ENCODE measurements at regions of chr1 and their contacts with region 1.

Region 1: GRCh38 chr1:20786253-20787028 is 666 bp downstream of the HP1BP3 start:
- DNase-seq: peak; percentile 90 to 98 (median 96)
- ATAC-seq: peak; percentile 75
- H3K4me3 ChIP-seq: peak overlapping the region; percentile 87
- H3K4me3 Mint-ChIP-seq: peak overlapping the region; percentile 99
- H3K27ac ChIP-seq: peak overlapping the region; percentile 85
- H3K27ac Mint-ChIP-seq: peak overlapping the region; percentile 97
- H3K4me1 ChIP-seq: peaks cover 37% of the 10 kb centered on the region
- H3K4me1 Mint-ChIP-seq: peaks cover 42% of the 10 kb centered on the region
- H3K27me3 ChIP-seq: no peaks in the 10 kb centered on the region
- H3K27me3 Mint-ChIP-seq: no peaks in the 10 kb centered on the region
- CTCF ChIP-seq: no peak

Region 2: DNA sequence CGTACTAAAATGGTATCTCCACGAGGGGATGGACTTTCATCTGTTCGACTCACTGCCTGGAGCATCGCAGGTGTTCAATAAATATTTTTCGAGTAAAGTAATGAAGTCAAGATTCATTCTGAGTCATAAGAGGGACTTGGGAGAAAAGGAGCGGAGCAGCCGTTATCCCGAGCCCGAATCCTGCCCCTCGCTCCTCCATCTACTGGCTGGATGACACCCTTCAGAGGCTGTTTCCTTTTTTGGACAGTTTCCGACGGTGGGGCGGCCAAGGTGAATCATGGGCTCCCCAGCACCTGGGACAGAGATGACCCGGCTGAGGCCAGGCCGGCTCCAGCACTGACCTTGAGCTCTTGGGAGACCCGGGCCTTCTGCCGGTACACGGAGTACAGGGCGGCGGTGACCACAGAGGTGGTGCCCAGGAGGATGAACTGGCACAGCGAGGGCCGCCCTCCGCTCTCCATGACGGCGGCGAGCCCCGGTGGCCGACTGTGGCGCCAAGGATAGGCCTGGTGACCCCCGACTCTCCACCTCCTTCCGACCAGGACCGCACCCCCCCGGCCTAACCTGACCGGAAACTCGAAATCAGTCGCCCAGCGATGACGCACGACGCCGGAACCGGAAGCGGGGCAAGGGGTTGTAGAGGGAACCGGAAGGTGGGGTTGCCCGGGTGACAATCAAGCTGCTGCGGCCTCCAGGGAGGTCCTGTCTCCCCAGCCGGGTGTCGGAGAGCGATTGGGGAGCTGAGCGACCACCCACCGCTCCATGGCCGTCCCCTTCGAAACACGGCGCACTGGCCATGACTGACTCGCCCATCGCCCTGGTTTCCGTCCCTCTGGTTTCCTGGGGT is 278.7 kb before region 1 on chr1 and contains the start of gene MUL1:
- CTCF ChIA-PET with region 1: no interaction called
- POLR2A ChIA-PET with region 1: no interaction called
- intact Hi-C with region 1: loop called in 1 of 2 experiments (anchors 2 kb)
- DNase-seq: peak; percentile 85 to 95 (median 91)
- ATAC-seq: peak; percentile 85
- H3K4me3 ChIP-seq: peak within 1 kb of the TSS; percentile 100
- H3K4me3 Mint-ChIP-seq: peak within 1 kb of the TSS; percentile 86
- H3K27ac ChIP-seq: peak within 1 kb of the TSS; percentile 93 to 98
- H3K27ac Mint-ChIP-seq: peak within 1 kb of the TSS; percentile 83
- H3K4me1 ChIP-seq: peaks cover 25% of the 10 kb centered on the region
- H3K4me1 Mint-ChIP-seq: peaks cover 30% of the 10 kb centered on the region
- H3K27me3 ChIP-seq: no peaks in the 10 kb centered on the region
- H3K27me3 Mint-ChIP-seq: peaks cover 11% of the 10 kb centered on the region
- CTCF ChIP-seq: no peak
- total RNA-seq, gene MUL1: 17.2 to 17.6 TPM

Region 3: DNA sequence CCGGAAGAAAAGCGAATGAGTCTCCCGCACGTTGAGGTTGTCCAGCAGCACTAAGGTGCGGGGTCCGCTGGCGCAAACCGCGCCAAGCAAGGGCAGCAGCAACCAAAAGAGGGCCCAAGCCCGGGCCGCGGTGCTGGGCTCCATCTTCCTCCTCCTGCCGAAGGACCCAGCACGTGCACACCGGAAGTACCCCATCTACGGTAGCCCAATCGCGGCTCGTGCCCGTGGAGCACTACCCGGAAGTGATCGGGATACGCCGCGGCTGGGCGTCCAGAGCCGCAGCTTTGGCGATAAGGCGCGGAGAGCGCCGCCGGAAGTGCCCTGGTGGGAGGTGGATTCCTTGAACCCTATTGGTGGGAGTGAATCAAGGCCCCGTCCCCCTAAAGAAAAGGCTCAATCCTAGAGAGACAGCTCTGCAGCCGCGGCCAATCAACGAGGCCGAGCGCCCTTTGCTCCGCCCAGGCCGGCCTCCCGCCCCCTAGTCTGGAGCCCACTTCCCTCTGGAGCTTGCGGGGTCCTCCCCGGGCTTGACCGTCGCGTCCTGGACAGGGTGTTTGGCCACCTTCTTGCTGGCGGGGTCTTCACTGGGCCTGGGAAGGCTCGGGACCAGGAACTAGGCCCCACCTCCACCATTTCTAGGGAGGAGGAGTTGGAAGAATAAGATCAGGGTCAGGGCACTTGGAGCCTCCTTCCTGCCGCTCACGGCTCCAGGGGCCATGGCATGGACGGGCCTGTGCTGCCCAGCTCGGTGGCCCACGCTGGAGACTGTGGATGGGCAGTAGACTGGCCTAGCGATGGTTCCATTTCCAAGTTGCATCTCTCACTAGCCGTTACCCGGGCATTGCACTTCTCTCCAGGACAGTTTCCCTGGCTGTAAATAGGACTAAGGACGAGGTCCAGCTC is 125.0 kb before region 1 on chr1 and contains the start of gene DDOST:
- CTCF ChIA-PET with region 1: interaction called, 4 read pairs
- POLR2A ChIA-PET with region 1: interaction called, 17 read pairs
- intact Hi-C with region 1: loop called in 1 of 2 experiments (anchors 2 kb)
- DNase-seq: peak; percentile 86 to 98 (median 93)
- ATAC-seq: peak; percentile 96
- H3K4me3 ChIP-seq: peak within 1 kb of the TSS; percentile 99
- H3K4me3 Mint-ChIP-seq: peak within 1 kb of the TSS; percentile 97
- H3K27ac ChIP-seq: peak within 1 kb of the TSS; percentile 77 to 84
- H3K27ac Mint-ChIP-seq: peak within 1 kb of the TSS; percentile 88
- H3K4me1 ChIP-seq: peaks cover 45% of the 10 kb centered on the region
- H3K4me1 Mint-ChIP-seq: peaks cover 50% of the 10 kb centered on the region
- H3K27me3 ChIP-seq: no peaks in the 10 kb centered on the region
- H3K27me3 Mint-ChIP-seq: no peaks in the 10 kb centered on the region
- CTCF ChIP-seq: peak; percentile 54
- total RNA-seq, gene DDOST: 96.1 to 101 TPM

Region 4: DNA sequence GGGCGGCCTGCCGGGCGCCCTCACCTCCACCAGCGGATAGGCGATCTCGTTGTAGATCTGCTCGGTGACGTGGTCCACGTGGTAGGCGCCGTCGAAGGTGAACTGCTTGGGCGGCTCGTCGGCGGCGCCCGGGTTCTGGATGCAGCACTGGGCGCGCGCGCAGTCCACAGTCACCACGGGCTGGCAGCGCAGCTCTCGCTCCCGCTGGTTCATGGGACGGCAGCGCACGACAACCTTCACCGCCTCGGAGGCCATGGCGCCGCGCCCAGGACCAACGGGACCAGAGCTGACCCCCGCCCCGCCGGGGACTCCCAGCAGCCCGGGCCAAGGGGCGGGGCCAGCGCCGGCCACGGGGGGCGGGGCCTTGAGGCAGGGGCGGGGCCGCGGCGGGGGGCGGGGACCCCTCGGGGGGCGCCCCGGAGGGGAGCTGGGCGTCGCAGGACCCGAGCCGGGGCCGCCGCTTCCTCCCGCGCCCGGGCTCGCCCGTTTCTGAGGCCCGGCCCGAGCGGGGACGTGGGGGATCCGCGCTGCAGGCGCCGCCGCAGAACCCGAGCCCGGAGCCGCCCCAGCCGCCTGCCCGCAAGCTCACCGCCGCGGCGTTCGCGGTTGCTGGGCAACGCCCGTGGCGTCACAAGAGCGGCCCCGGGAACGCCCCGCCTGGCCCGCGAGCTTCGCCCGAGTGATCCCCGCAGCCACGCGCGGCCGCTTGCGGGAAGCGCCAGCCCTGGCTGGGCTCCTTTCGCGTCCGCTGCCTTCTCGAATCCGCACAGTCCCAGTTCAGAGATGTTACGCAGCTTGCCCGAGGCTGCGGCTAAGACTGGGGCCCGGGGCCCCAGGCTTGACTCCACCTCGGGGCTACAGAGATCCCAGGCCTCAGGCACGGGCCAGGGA is 68.7 kb before region 1 on chr1 and contains the start of gene KIF17:
- CTCF ChIA-PET with region 1: no interaction called
- POLR2A ChIA-PET with region 1: interaction called, 15 read pairs
- intact Hi-C with region 1: no loop called
- DNase-seq: peak; percentile 30 to 89 (median 56)
- ATAC-seq: peak; percentile 74
- H3K4me3 ChIP-seq: peak within 1 kb of the TSS; percentile 19
- H3K4me3 Mint-ChIP-seq: peak within 1 kb of the TSS; percentile 81
- H3K27ac ChIP-seq: no peak within 1 kb of the TSS
- H3K27ac Mint-ChIP-seq: no peak within 1 kb of the TSS
- H3K4me1 ChIP-seq: peaks cover 13% of the 10 kb centered on the region
- H3K4me1 Mint-ChIP-seq: peaks cover 13% of the 10 kb centered on the region
- H3K27me3 ChIP-seq: peaks cover 18 to 20% of the 10 kb centered on the region in 2 experiments
- H3K27me3 Mint-ChIP-seq: peaks cover 31% of the 10 kb centered on the region
- CTCF ChIP-seq: no peak
- total RNA-seq, gene KIF17: not detected

Region 5: DNA sequence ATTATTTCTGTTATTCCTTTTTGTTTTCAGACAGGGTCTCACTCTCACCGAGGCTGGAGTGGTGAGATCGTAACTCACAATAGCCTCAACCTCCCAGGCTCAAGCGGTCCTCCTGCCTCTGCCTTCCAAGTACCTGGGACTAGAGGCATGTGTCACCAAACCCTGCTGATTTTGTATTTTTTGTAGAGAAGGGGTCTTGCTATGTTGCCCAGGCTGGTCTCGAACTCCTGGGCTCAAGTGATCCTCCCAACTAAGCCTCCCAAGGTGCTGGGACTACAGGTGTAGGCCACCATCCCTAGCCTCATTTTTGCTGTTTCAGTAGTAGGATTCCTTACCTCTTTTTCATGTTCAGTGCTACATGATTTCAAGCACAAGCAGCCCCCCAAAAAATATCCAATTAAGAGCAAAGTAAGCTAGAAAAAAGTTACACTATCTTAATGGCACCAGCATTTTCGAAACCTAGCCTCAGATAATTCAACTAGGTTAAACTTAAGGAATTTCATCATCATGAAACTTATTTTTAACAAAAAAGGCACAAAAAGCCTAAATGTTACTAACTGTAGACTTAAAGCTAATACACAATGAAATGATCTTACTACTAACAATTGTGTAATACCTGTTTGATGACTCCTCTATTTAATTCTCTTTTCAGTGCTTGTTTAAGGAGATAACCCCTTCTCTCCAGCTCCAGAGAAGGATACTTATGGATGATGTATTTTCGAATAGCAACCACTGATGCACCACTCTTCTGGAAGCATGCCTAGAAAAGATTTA is 15.9 kb before region 1 on chr1:
- CTCF ChIA-PET with region 1: no interaction called
- POLR2A ChIA-PET with region 1: interaction called, 13 read pairs
- intact Hi-C with region 1: no loop called
- DNase-seq: no peak
- ATAC-seq: no peak
- H3K4me3 ChIP-seq: no peak overlapping the region
- H3K4me3 Mint-ChIP-seq: no peak overlapping the region
- H3K27ac ChIP-seq: no peak overlapping the region
- H3K27ac Mint-ChIP-seq: peak overlapping the region; percentile 27
- H3K4me1 ChIP-seq: no peaks in the 10 kb centered on the region
- H3K4me1 Mint-ChIP-seq: peaks cover 13% of the 10 kb centered on the region
- H3K27me3 ChIP-seq: no peaks in the 10 kb centered on the region
- H3K27me3 Mint-ChIP-seq: no peaks in the 10 kb centered on the region
- CTCF ChIP-seq: no peak

Region 6: DNA sequence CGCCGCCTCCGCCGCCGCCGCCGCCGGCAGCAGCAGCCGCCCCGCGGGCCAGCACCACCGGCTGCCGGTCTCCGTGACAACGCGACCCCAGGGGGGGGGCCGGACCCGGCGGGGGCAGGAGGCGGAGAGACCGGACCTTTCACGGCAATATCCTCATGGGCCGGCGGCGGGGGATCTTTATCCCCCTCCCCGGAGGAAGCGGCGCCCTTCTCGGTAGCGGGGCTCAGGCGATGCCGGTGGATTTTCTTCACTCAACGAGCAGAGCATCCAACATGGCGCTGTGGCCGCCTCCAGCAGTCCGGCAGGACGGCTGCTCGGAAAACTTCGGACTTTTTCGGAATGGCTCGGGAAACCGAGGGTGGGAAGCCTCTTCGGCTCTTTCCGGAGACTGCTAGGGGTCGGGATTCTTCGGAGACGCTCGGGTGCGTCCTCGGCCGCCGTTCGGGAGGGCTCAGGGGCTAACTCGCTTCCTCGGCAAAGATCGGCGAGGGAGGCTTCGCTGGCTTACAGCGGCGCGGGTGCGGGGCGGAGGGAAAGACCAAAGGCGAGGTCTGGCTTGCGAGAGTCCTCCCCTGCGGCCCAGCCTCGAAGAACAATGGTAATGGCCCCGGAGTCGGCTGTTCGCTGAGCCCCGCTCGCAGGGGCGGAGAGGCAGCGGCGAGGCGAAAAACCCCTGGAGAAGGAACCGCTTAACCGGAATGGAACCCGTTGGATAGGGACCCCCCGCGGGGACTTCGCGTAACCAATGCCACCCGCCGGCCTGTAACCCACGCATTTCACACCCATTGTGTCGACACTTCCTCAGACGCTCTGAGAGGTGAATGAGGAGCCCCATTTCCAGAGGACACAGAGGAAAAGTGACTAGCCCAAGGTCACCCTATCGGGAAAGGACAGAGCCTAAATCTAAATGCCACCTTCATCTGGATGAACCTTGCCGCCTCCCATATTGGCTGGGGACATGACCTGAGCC is 390.4 kb after region 1 on chr1 and contains the start of gene EIF4G3:
- CTCF ChIA-PET with region 1: no interaction called
- POLR2A ChIA-PET with region 1: interaction called, 5 read pairs
- intact Hi-C with region 1: loop called (anchors 5 kb)
- DNase-seq: peak; percentile 98 to 100 (median 99)
- ATAC-seq: peak; percentile 94
- H3K4me3 ChIP-seq: peak within 1 kb of the TSS; percentile 88
- H3K4me3 Mint-ChIP-seq: peak within 1 kb of the TSS; percentile 89
- H3K27ac ChIP-seq: peak within 1 kb of the TSS; percentile 72 to 75
- H3K27ac Mint-ChIP-seq: peak within 1 kb of the TSS; percentile 85
- H3K4me1 ChIP-seq: peaks cover 17% of the 10 kb centered on the region
- H3K4me1 Mint-ChIP-seq: peaks cover 20% of the 10 kb centered on the region
- H3K27me3 ChIP-seq: no peaks in the 10 kb centered on the region
- H3K27me3 Mint-ChIP-seq: no peaks in the 10 kb centered on the region
- CTCF ChIP-seq: no peak
- total RNA-seq, gene EIF4G3: 18.8 to 21.5 TPM